ENCODE measurements at regions of chr3 and their contacts with region 1.

Region 1: DNA sequence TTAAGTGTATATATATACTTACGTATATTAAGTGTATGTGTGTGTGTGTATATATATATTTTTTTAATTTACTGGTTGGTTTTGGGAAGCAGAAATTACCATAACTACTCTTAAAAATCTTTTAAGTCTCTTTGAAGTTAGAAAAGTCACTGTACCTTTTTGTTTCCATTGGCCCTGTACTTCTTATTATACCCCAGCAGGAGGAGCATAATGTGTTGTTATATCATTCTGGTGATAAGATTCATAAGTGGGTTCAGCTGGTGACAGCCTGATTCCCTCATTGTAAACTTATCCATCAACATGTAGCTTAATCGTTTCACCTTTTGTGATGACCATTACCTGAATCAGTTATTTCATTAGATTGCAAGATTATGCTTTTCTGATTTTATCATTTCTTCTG is 30.8 kb downstream of the MLH1 start:
- DNase-seq: no peak
- ATAC-seq: peak; percentile 72
- H3K4me3 ChIP-seq: no peak overlapping the region
- H3K27ac ChIP-seq: no peak overlapping the region
- H3K4me1 ChIP-seq: peaks cover 4% of the 10 kb centered on the region; the same call in 1 of the 2 replicates
- H3K27me3 ChIP-seq: no peaks in the 10 kb centered on the region
- CTCF ChIP-seq: peak; percentile 27 to 44 (median 35); a peak in 3 of 6 replicates
- EP300 ChIP-seq: no peak
- POLR2A ChIP-seq: no peak
- RAD21 ChIP-seq: peak; percentile 48

Region 2: DNA sequence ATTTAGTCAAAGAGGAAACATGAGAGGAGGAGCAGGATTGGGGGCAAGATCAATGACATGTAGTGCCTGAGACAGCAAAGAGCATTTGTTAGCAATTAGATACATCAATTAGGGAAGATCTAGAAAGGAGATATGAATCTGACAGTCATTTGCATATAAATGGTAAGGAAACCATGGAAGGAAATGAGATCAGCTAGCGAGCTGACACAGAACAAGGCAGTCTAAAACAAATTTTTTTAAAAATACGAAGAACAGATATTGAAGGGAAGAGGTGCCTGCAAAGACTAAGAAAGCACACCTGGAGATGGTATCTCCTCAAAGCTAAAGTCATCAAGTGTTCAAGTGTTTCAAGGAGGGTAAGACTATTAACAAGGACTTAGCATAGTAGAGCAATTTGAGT is 35.7 kb before region 1 on chr3:
- CTCF ChIA-PET with region 1: interaction called, 7 read pairs
- POLR2A ChIA-PET with region 1: interaction called, 6 read pairs
- RAD21 ChIA-PET with region 1: interaction called, 8 read pairs
- SMC1A ChIA-PET with region 1: interaction called, 11 read pairs
- in situ Hi-C with region 1: no loop called
- intact Hi-C with region 1: no loop called
- DNase-seq: no peak
- ATAC-seq: no peak
- H3K4me3 ChIP-seq: peak overlapping the region; percentile 45; the same call in 1 of the 2 replicates
- H3K27ac ChIP-seq: peak overlapping the region; percentile 15; the same call in 1 of the 2 replicates
- H3K4me1 ChIP-seq: no peaks in the 10 kb centered on the region
- H3K27me3 ChIP-seq: no peaks in the 10 kb centered on the region
- CTCF ChIP-seq: no peak
- EP300 ChIP-seq: no peak
- POLR2A ChIP-seq: no peak
- RAD21 ChIP-seq: no peak

Region 3: GRCh38 chr3:37039161-37039846 is 15.2 kb after region 1 on chr3:
- CTCF ChIA-PET with region 1: interaction called, 13 read pairs
- POLR2A ChIA-PET with region 1: no interaction called
- RAD21 ChIA-PET with region 1: interaction called, 3 read pairs
- SMC1A ChIA-PET with region 1: interaction called, 12 read pairs
- in situ Hi-C with region 1: no loop called
- intact Hi-C with region 1: no loop called
- DNase-seq: no peak
- ATAC-seq: no peak
- H3K4me3 ChIP-seq: no peak overlapping the region
- H3K27ac ChIP-seq: no peak overlapping the region
- H3K4me1 ChIP-seq: no peaks in the 10 kb centered on the region
- H3K27me3 ChIP-seq: no peaks in the 10 kb centered on the region
- CTCF ChIP-seq: no peak
- EP300 ChIP-seq: no peak
- POLR2A ChIP-seq: no peak
- RAD21 ChIP-seq: no peak

Region 4: DNA sequence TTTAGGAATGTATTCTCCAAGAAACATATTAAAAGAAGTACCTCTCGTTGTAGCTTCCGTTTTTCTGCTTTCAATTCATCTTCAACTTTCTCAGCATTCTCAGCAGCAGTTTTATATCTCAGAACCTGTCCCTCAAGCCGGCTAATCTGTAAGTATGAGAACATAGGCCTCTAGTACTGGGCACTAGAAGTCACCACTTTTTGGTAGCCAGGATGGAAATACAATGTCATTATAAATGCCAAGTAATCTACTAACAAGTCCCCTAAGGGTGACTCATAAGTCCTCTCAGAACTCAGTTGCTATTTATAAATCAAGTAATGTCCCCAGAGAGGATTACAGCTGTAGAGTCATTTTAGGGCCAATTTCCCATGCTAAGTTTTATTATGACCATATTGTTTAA is 30.3 kb after region 1 on chr3:
- CTCF ChIA-PET with region 1: interaction called, 4 read pairs
- POLR2A ChIA-PET with region 1: no interaction called
- RAD21 ChIA-PET with region 1: interaction called, 10 read pairs
- SMC1A ChIA-PET with region 1: interaction called, 12 read pairs
- in situ Hi-C with region 1: no loop called
- intact Hi-C with region 1: no loop called
- DNase-seq: peak; percentile 32
- ATAC-seq: peak; percentile 93
- H3K4me3 ChIP-seq: no peak overlapping the region
- H3K27ac ChIP-seq: peak overlapping the region; percentile 38; the same call in 1 of the 2 replicates
- H3K4me1 ChIP-seq: no peaks in the 10 kb centered on the region
- H3K27me3 ChIP-seq: no peaks in the 10 kb centered on the region
- CTCF ChIP-seq: no peak
- EP300 ChIP-seq: peak in 1 of 2 experiments; percentile 63; a peak in 1 of 4 replicates
- POLR2A ChIP-seq: no peak
- RAD21 ChIP-seq: no peak

Region 5: GRCh38 chr3:37210230-37210629 is 186.1 kb after region 1 on chr3:
- CTCF ChIA-PET with region 1: interaction called, 51 read pairs
- POLR2A ChIA-PET with region 1: interaction called, 3 read pairs
- RAD21 ChIA-PET with region 1: interaction called, 17 read pairs
- SMC1A ChIA-PET with region 1: interaction called, 27 read pairs
- in situ Hi-C with region 1: loop called (anchors 5 kb)
- intact Hi-C with region 1: loop called (anchors 2 kb)
- DNase-seq: no peak
- ATAC-seq: no peak
- H3K4me3 ChIP-seq: no peak overlapping the region
- H3K27ac ChIP-seq: no peak overlapping the region
- H3K4me1 ChIP-seq: no peaks in the 10 kb centered on the region
- H3K27me3 ChIP-seq: no peaks in the 10 kb centered on the region
- CTCF ChIP-seq: no peak
- EP300 ChIP-seq: no peak
- POLR2A ChIP-seq: no peak
- RAD21 ChIP-seq: no peak

Region 6: DNA sequence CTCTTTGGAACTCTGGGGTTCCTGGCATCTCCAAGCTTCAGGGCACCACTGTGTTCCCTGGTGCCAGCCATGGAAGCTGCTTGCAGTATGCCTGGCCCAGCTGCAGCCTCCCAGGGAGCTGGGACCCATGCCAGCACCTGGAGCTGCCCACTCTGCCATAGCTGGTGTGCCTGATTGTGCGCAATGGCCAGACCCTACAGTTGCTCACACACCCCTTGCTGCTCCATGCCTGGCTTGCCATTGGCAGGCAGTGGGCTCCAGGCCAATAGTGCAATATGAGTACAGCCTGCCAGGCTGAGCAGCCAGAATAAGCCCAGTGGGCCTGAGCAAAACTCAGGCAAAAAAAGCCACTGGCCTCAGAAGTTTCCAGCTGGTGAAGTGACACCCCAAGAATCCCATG is 194.1 kb after region 1 on chr3:
- CTCF ChIA-PET with region 1: interaction called, 51 read pairs
- POLR2A ChIA-PET with region 1: no interaction called
- RAD21 ChIA-PET with region 1: interaction called, 17 read pairs
- SMC1A ChIA-PET with region 1: interaction called, 27 read pairs
- in situ Hi-C with region 1: loop called (anchors 5 kb)
- intact Hi-C with region 1: loop called (anchors 2 kb)
- DNase-seq: no peak
- ATAC-seq: no peak
- H3K4me3 ChIP-seq: no peak overlapping the region
- H3K27ac ChIP-seq: no peak overlapping the region
- H3K4me1 ChIP-seq: no peaks in the 10 kb centered on the region
- H3K27me3 ChIP-seq: no peaks in the 10 kb centered on the region
- CTCF ChIP-seq: no peak
- EP300 ChIP-seq: no peak
- POLR2A ChIP-seq: no peak
- RAD21 ChIP-seq: no peak

Measured in GM12878 (cell line).